ENCODE measurements at regions of chr3 and their contacts with region 1.

Region 1: GRCh38 chr3:24365194-24365612 is 129.4 kb downstream of the THRB start:
- DNase-seq: peak; percentile 98
- ATAC-seq: peak; percentile 100
- H3K4me3 ChIP-seq: peak overlapping the region; percentile 19; the same call in 1 of the 2 replicates
- H3K27ac ChIP-seq: peak overlapping the region; percentile 63
- H3K4me1 ChIP-seq: peaks cover 33% of the 10 kb centered on the region
- H3K27me3 ChIP-seq: no peaks in the 10 kb centered on the region
- CTCF ChIP-seq: peak; percentile 39

Region 2: GRCh38 chr3:24069045-24069444 is 296.2 kb before region 1 on chr3:
- CTCF ChIA-PET with region 1: no interaction called
- POLR2A ChIA-PET with region 1: no interaction called
- intact Hi-C with region 1: loop called (anchors 10 kb)
- DNase-seq: peak; percentile 42
- ATAC-seq: peak; percentile 48
- H3K4me3 ChIP-seq: no peak overlapping the region
- H3K27ac ChIP-seq: no peak overlapping the region
- H3K4me1 ChIP-seq: no peaks in the 10 kb centered on the region
- H3K27me3 ChIP-seq: no peaks in the 10 kb centered on the region
- CTCF ChIP-seq: peak; percentile 62

Region 3: GRCh38 chr3:24316811-24317383 is 48.3 kb before region 1 on chr3:
- CTCF ChIA-PET with region 1: no interaction called
- POLR2A ChIA-PET with region 1: no interaction called
- intact Hi-C with region 1: loop called (anchors 2 kb)
- DNase-seq: peak; percentile 95
- ATAC-seq: peak; percentile 71
- H3K4me3 ChIP-seq: peak overlapping the region; percentile 32; the same call in 1 of the 2 replicates
- H3K27ac ChIP-seq: peak overlapping the region; percentile 78
- H3K4me1 ChIP-seq: peaks cover 38% of the 10 kb centered on the region
- H3K27me3 ChIP-seq: no peaks in the 10 kb centered on the region
- CTCF ChIP-seq: no peak

Region 4: GRCh38 chr3:24343084-24343783 is 22.0 kb before region 1 on chr3:
- CTCF ChIA-PET with region 1: no interaction called
- POLR2A ChIA-PET with region 1: no interaction called
- intact Hi-C with region 1: loop called (anchors 1 kb)
- DNase-seq: peak; percentile 94
- ATAC-seq: peak; percentile 93
- H3K4me3 ChIP-seq: peak overlapping the region; percentile 23; the same call in 1 of the 2 replicates
- H3K27ac ChIP-seq: peak overlapping the region; percentile 86
- H3K4me1 ChIP-seq: peaks cover 48% of the 10 kb centered on the region
- H3K27me3 ChIP-seq: no peaks in the 10 kb centered on the region
- CTCF ChIP-seq: no peak

Region 5: DNA sequence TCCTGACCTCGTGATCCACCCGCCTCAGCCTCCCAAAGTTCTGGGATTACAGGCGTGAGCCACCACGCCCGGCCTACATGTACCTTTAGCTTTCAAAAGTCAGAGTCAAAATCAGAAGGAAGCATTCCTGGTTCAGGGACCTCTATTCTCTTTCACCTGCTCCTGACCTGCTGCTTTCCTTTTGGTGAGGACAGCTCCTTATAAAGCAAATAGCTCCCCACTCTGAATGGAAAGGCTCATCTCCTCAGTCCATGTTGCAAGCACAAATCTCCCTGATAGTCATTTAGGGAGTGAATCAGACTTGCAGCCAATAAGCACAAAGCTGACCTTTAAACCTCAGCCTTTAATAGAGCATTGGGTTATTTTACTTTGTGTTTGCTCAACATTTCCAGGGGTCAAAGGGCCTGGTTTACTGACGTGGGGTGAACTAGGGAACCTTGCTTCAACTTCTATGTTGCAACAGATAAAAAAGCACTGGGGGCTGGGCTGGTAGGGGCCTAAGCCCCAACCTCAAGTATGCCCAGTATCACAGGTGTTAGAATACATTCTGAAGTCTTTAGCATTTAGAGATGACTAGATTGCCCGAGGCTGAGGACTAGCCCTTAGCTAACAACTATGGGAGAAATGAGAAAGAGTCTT is 86.4 kb after region 1 on chr3:
- CTCF ChIA-PET with region 1: no interaction called
- POLR2A ChIA-PET with region 1: no interaction called
- intact Hi-C with region 1: no loop called
- DNase-seq: peak; percentile 67
- ATAC-seq: peak; percentile 45
- H3K4me3 ChIP-seq: no peak overlapping the region
- H3K27ac ChIP-seq: 0 out of 2 replicates have a peak overlapping the region, but pooled peaks have one; percentile 4
- H3K4me1 ChIP-seq: peaks cover 27% of the 10 kb centered on the region
- H3K27me3 ChIP-seq: no peaks in the 10 kb centered on the region
- CTCF ChIP-seq: no peak

Region 6: DNA sequence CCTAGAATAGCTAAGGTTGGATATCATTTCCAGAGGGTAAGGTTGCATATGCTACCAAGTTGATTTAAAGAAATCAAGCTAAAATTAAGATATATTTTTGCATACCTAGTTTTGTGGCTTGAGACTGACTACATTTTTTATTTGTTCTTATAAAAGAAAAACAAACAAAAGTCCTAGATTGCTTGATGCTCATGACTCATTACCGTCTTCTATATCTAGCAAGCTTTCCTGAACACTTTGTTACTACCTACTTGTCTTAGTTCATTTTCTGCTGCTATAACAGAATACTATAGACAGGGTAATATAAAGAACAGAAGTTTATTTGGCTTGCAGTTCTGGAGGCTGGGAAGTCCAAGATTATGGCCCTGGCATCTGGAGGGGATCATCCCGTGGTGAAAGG is 281.6 kb after region 1 on chr3:
- CTCF ChIA-PET with region 1: no interaction called
- POLR2A ChIA-PET with region 1: no interaction called
- intact Hi-C with region 1: loop called (anchors 2 kb)
- DNase-seq: peak; percentile 68
- ATAC-seq: peak; percentile 92
- H3K4me3 ChIP-seq: no peak overlapping the region
- H3K27ac ChIP-seq: peak overlapping the region; percentile 11
- H3K4me1 ChIP-seq: peaks cover 15% of the 10 kb centered on the region
- H3K27me3 ChIP-seq: no peaks in the 10 kb centered on the region
- CTCF ChIP-seq: no peak